ENCODE measurements at regions of chr10 and their contacts with region 1.

Region 1: DNA sequence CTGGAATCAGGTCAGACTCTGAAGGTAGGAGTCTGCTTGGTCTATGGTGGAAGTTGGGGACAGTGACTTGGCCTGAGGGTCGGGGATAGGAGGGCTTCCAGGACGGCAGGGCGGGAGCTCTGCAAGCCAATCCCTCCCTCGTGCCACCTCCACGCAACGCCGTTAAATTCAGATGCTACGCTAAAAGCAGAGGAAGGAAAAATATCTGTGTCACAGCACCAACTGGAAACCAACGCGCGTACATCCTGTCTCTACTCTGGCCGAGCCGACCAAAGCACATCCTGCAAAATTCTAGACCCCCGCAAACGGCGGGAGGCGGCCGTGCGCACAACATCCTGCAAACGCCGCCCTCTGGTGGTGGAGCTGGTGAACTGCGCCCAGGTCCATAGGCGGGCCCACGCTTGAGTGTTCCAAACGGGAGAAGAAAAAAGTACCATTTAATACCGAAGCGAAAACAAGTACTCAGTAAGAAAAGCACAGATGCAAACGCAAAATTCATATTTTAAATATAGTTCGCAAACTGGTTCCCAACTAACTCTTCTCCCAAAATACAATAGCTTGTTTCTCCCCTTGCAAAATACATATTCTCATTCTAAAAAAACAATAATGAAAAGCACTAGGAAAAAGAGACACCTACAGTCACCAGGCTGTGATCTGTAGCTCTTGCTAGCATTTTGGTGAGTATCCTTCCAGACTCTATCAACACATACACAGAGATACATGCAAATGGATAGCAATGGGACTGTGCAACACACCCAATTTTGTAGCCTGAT is 45.7 kb upstream of the HSPA12A start:
- DNase-seq: peak; percentile 88
- ATAC-seq: peak; percentile 91
- H3K4me3 Mint-ChIP-seq: peak overlapping the region; percentile 49
- H3K27ac Mint-ChIP-seq: peak overlapping the region; percentile 74
- H3K4me1 Mint-ChIP-seq: peaks cover 12% of the 10 kb centered on the region
- H3K27me3 Mint-ChIP-seq: peaks cover 11% of the 10 kb centered on the region

Region 2: GRCh38 chr10:116688241-116688711 is 99.8 kb before region 1 on chr10:
- CTCF ChIA-PET with region 1: interaction called, 86 read pairs
- POLR2A ChIA-PET with region 1: no interaction called
- DNase-seq: no peak
- ATAC-seq: no peak
- H3K4me3 Mint-ChIP-seq: no peak overlapping the region
- H3K27ac Mint-ChIP-seq: no peak overlapping the region
- H3K4me1 Mint-ChIP-seq: no peaks in the 10 kb centered on the region
- H3K27me3 Mint-ChIP-seq: peaks cover 16% of the 10 kb centered on the region

Measured in activated CD8-positive, alpha-beta T cell treated with anti-CD3 and anti-CD28 coated beads, Interleukin-2, amount 10 ng/mL, durations not matched to agents 7 days and 5 days (primary cell).